ENCODE measurements at regions of chr12 and their contacts with region 1.

Region 1: GRCh38 chr12:131132118-131132892 is 178.6 kb downstream of the ADGRD1 start:
- DNase-seq: peak; percentile 33 to 83 (median 64)
- H3K4me3 ChIP-seq: no peak overlapping the region
- H3K27ac ChIP-seq: no peak overlapping the region
- H3K4me1 ChIP-seq: peaks cover 0 to 6% of the 10 kb centered on the region in 2 donors
- H3K27me3 ChIP-seq: no peaks in the 10 kb centered on the region
- CTCF ChIP-seq: peak; percentile 50 to 75 (median 66)
- POLR2A ChIP-seq: no peak

Region 2: DNA sequence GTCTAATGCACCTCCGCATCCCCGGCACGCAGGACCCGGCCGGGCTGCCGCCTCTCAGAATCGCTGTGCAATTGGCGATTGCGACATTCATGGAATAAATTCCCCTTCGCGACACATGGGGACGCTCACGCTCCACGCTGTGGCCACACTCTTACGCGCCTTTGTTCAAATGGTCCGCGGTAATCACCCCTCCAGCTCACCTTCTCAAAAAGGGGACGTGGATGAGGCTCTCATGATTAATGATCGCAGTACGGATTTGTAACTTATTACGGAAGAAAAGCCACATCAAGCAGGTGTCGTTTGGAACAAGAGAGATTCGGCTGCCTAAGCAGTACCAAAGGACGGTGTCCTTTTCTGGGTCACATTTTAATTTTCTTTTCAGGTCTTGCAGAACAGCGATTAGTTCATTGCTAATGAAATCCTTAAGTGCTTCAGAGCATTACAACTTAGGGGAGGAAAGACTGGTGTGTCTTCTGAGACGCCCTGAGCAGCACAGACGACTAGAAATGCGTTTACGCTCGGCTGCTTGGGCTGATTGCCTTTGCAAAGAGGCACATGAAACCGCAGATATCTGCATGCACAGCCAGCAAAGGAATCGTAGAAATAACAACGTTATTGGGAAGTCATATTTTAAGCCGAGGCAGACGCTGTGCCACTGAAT is 215.9 kb before region 1 on chr12:
- intact Hi-C with region 1: loop called in 1 of 2 experiments (anchors 10 kb)
- DNase-seq: peak; percentile 26 to 69 (median 36)
- H3K4me3 ChIP-seq: no peak overlapping the region
- H3K27ac ChIP-seq: no peak overlapping the region
- H3K4me1 ChIP-seq: no peaks in the 10 kb centered on the region
- H3K27me3 ChIP-seq: peaks cover 9% of the 10 kb centered on the region
- CTCF ChIP-seq: peak; percentile 30 to 94 (median 80)
- POLR2A ChIP-seq: no peak